H1 (cell line): ENCODE measurements at regions of chr2 and their contacts with region 1.

Region 1: GRCh38 chr2:26976237-26976636 is 5.8 kb downstream of the MAPRE3 start:
- DNase-seq: no peak
- H3K4me3 ChIP-seq: no peak overlapping the region
- H3K27ac ChIP-seq: no peak overlapping the region
- H3K4me1 ChIP-seq: peaks cover 0 to 11% (median 4%) of the 10 kb centered on the region in 4 experiments; a peak in 6 of 7 replicates
- H3K27me3 ChIP-seq: peaks cover 0 to 7% (median 0%) of the 10 kb centered on the region in 4 experiments; a peak in 3 of 7 replicates
- CTCF ChIP-seq: no peak
- EP300 ChIP-seq: no peak
- POLR2A ChIP-seq: no peak
- RAD21 ChIP-seq: no peak

Region 2: GRCh38 chr2:26959331-26959730 is 16.9 kb before region 1 on chr2:
- CTCF ChIA-PET with region 1: interaction called, 47 read pairs
- POLR2A ChIA-PET with region 1: interaction called, 4 read pairs
- DNase-seq: no peak
- H3K4me3 ChIP-seq: no peak overlapping the region
- H3K27ac ChIP-seq: no peak overlapping the region
- H3K4me1 ChIP-seq: peaks cover 0 to 2% (median 0%) of the 10 kb centered on the region in 4 experiments; a peak in 1 of 7 replicates
- H3K27me3 ChIP-seq: no peaks in the 10 kb centered on the region; a peak in 1 of 7 replicates
- CTCF ChIP-seq: no peak
- EP300 ChIP-seq: no peak
- POLR2A ChIP-seq: no peak
- RAD21 ChIP-seq: no peak